Caco-2 (cell line): ENCODE measurements at regions of chr13 and their contacts with region 1.

Region 1: GRCh38 chr13:79846386-79846785 is 365.4 kb downstream of the NDFIP2 start:
- DNase-seq: no peak
- H3K4me3 ChIP-seq: no peak overlapping the region
- H3K4me3 Mint-ChIP-seq: no peak overlapping the region
- H3K27ac Mint-ChIP-seq: no peak overlapping the region
- H3K4me1 ChIP-seq: no peaks in the 10 kb centered on the region
- H3K4me1 Mint-ChIP-seq: peaks cover 13% of the 10 kb centered on the region
- H3K27me3 ChIP-seq: no peaks in the 10 kb centered on the region
- H3K27me3 Mint-ChIP-seq: no peaks in the 10 kb centered on the region
- CTCF ChIP-seq: no peak

Region 2: DNA sequence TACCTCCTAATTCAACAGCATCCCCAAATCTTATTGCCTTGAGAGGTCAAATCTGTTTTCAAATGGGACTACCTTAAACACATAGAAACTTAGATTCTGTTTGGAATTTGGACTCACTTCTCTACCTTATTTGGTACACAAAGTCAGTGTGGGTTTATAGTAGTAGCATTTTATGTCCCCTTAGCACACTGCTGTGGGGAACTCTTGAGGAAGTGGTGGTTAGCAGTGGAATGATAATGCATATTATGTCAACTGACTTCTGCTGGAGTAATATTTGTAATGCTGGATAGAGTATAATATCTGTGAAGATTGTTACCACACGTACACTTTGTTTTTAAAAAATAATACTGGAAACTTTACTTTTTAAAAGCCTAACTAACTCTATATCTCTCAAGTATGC is 20.9 kb after region 1 on chr13:
- CTCF ChIA-PET with region 1: no interaction called
- POLR2A ChIA-PET with region 1: no interaction called
- intact Hi-C with region 1: loop called (anchors 2 kb)
- DNase-seq: no peak
- H3K4me3 ChIP-seq: no peak overlapping the region
- H3K4me3 Mint-ChIP-seq: no peak overlapping the region
- H3K27ac Mint-ChIP-seq: peak overlapping the region; percentile 54
- H3K4me1 ChIP-seq: peaks cover 57% of the 10 kb centered on the region
- H3K4me1 Mint-ChIP-seq: peaks cover 54% of the 10 kb centered on the region
- H3K27me3 ChIP-seq: no peaks in the 10 kb centered on the region
- H3K27me3 Mint-ChIP-seq: no peaks in the 10 kb centered on the region
- CTCF ChIP-seq: no peak